ENCODE measurements at regions of chr3 and their contacts with region 1.

Region 1: GRCh38 chr3:184805351-184806038 is 6.5 kb upstream of the VPS8 start:
- DNase-seq: no peak
- ATAC-seq: no peak
- H3K4me3 Mint-ChIP-seq: no peak overlapping the region
- H3K27ac Mint-ChIP-seq: no peak overlapping the region
- H3K4me1 Mint-ChIP-seq: peaks cover 3% of the 10 kb centered on the region
- H3K27me3 Mint-ChIP-seq: peaks cover 11% of the 10 kb centered on the region
- CTCF ChIP-seq: no peak

Region 2: DNA sequence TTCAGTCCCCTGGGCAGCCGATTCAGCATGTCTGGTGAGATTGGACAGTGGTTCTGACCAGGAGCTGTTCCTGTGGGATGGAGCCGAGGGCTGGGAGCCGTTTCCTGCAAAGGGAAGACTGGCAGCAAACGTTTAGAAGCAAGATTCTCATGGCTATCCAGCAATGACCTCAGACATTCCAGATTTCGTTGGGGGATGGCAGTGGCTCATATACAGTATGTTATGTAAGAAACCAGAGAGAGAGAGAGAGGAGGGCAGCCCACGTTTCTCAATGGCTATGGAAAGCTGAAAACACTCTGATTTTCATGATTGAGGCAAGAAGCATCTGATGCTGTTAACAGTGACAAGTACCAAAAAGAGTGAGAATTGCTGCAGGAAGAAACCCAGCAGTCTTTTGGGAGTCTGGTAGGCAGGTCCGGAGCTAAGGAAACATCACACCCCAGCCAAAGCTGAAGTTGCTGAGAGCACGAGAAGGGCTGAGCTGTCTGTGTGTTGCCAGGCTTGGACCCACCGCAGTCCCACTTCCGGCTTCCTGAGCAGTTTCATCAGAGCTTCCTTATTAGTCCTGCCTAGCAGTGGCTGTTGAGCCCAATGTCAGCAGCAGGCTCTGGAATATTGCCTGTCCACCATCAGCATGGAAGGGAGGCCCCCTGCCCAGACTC is 19.1 kb before region 1 on chr3:
- CTCF ChIA-PET with region 1: interaction called, 13 read pairs
- POLR2A ChIA-PET with region 1: interaction called, 4 read pairs
- intact Hi-C with region 1: no loop called
- DNase-seq: peak; percentile 56
- ATAC-seq: peak; percentile 73
- H3K4me3 Mint-ChIP-seq: no peak overlapping the region
- H3K27ac Mint-ChIP-seq: no peak overlapping the region
- H3K4me1 Mint-ChIP-seq: peaks cover 21% of the 10 kb centered on the region
- H3K27me3 Mint-ChIP-seq: no peaks in the 10 kb centered on the region
- CTCF ChIP-seq: no peak